ENCODE measurements at regions of chr1 and their contacts with region 1.

Region 1: GRCh38 chr1:234326497-234327366 is 46.5 kb upstream of the COA6 start:
- DNase-seq: peak; percentile 27
- ATAC-seq: peak; percentile 59 to 83

Region 2: GRCh38 chr1:233304489-233305102 is 1022.1 kb before region 1 on chr1:
- intact Hi-C with region 1: loop called in 1 of 2 experiments (anchors 10 kb)
- DNase-seq: no peak
- ATAC-seq: no peak

Region 3: GRCh38 chr1:234499119-234499942 is 172.6 kb after region 1 on chr1:
- intact Hi-C with region 1: no loop called
- DNase-seq: peak; percentile 92
- ATAC-seq: peak; percentile 95 to 96